Caco-2 (cell line): ENCODE measurements at regions of chr5 and their contacts with region 1.

Region 1: GRCh38 chr5:160199410-160199911 is 29.8 kb upstream of the FABP6 start:
- DNase-seq: peak; percentile 62 to 90
- H3K4me3 ChIP-seq: peak overlapping the region; percentile 37
- H3K4me3 Mint-ChIP-seq: peak overlapping the region; percentile 78
- H3K27ac Mint-ChIP-seq: peak overlapping the region; percentile 75
- H3K4me1 ChIP-seq: peaks cover 21% of the 10 kb centered on the region
- H3K4me1 Mint-ChIP-seq: peaks cover 19% of the 10 kb centered on the region
- H3K27me3 ChIP-seq: no peaks in the 10 kb centered on the region
- H3K27me3 Mint-ChIP-seq: no peaks in the 10 kb centered on the region
- CTCF ChIP-seq: peak; percentile 63 to 94

Region 2: GRCh38 chr5:160209963-160210374 is 10.5 kb after region 1 on chr5:
- CTCF ChIA-PET with region 1: no interaction called
- POLR2A ChIA-PET with region 1: no interaction called
- intact Hi-C with region 1: loop called (anchors 1 kb)
- DNase-seq: peak; percentile 75 to 77
- H3K4me3 ChIP-seq: no peak overlapping the region
- H3K4me3 Mint-ChIP-seq: peak overlapping the region; percentile 8
- H3K27ac Mint-ChIP-seq: peak overlapping the region; percentile 65
- H3K4me1 ChIP-seq: peaks cover 26% of the 10 kb centered on the region
- H3K4me1 Mint-ChIP-seq: peaks cover 22% of the 10 kb centered on the region
- H3K27me3 ChIP-seq: no peaks in the 10 kb centered on the region
- H3K27me3 Mint-ChIP-seq: no peaks in the 10 kb centered on the region
- CTCF ChIP-seq: no peak

Region 3: GRCh38 chr5:160240350-160240749 is 40.9 kb after region 1 on chr5:
- CTCF ChIA-PET with region 1: interaction called, 3 read pairs
- POLR2A ChIA-PET with region 1: no interaction called
- intact Hi-C with region 1: loop called (anchors 1 kb)
- DNase-seq: no peak
- H3K4me3 ChIP-seq: no peak overlapping the region
- H3K4me3 Mint-ChIP-seq: no peak overlapping the region
- H3K27ac Mint-ChIP-seq: no peak overlapping the region
- H3K4me1 ChIP-seq: peaks cover 22% of the 10 kb centered on the region; the same call in 1 of the 2 replicates
- H3K4me1 Mint-ChIP-seq: peaks cover 14% of the 10 kb centered on the region
- H3K27me3 ChIP-seq: no peaks in the 10 kb centered on the region
- H3K27me3 Mint-ChIP-seq: no peaks in the 10 kb centered on the region
- CTCF ChIP-seq: no peak

Region 4: DNA sequence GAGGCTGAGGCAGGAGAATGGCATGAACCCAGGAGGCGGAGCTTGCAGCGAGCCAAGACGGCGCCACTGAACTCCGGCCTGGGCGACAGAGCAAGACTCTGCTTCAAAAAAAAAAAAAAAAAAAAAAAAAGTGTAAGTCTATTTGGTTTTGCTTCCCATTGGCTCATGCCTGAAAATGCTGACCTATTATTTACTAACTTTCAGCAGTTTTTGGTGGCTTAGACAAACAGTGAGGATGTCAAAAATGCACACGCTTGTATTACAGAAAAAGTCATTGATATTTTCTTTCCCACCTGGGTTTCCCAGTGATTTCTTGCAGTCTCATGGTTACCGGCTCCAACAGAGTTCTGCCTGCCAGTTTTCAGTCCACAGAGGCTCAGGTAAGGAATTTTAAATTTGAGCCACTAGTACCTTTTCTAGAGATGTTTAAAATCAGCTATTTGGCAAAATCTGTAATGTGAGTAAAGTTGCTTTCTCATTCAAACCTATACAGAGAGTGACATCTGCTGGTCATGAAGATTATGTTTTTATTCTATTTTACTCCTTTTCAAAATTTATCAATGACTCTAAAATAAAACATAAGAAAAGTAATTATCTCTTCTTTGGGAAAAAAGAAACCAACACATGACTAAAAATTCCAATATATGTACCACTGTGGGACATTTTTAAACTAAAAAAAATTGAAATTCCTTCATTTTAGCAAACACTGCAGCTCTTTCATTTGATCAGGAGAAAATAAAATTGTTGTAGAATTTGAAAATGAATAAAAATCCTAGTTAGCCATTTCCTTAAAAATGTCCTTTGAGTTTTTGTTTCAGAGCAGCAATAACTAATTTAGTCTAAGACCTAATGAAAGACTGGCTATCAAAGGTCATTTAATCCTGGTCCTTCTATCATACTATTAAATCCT is 191.6 kb after region 1 on chr5:
- CTCF ChIA-PET with region 1: interaction called, 3 read pairs
- POLR2A ChIA-PET with region 1: no interaction called
- intact Hi-C with region 1: loop called (anchors 1 kb)
- DNase-seq: no peak
- H3K4me3 ChIP-seq: no peak overlapping the region
- H3K4me3 Mint-ChIP-seq: no peak overlapping the region
- H3K27ac Mint-ChIP-seq: no peak overlapping the region
- H3K4me1 ChIP-seq: no peaks in the 10 kb centered on the region
- H3K4me1 Mint-ChIP-seq: no peaks in the 10 kb centered on the region
- H3K27me3 ChIP-seq: no peaks in the 10 kb centered on the region
- H3K27me3 Mint-ChIP-seq: no peaks in the 10 kb centered on the region
- CTCF ChIP-seq: peak; percentile 43 to 49